ENCODE measurements at regions of chr6 and their contacts with region 1.

Region 1: DNA sequence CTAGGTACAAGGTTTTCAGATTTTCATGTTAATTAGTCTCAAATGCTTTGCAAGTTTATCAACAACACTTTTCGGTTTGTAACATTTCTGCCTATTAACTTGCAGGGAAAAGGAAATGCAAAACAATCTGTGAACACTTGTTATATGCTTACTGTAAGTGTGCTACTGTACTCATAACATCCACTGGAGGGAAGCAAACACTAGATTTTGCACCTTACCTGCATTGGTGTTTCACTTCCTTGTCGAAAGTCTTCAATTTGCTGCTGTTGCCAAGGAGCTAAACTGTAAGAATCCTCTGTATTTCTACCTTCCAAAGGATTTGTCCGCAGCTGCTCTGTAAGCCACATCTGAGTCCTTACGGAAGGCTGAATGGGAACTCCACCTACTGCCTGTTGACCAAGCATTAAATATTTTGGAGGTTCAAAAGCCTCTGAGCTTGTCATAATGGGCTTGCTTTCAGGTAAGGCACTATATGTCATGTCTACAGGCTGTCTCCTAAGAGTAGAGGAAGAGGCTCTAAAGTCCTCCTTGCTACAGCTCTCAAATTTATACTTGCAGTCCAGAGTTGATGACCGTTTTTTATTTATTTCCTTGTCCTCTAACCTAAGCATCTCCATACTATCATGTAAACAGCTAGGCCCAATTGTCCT is 17.3 kb downstream of the PLN start:
- DNase-seq: peak; percentile 42
- H3K4me3 Mint-ChIP-seq: no peak overlapping the region
- H3K27ac Mint-ChIP-seq: peak overlapping the region; percentile 42
- H3K4me1 Mint-ChIP-seq: no peaks in the 10 kb centered on the region
- H3K27me3 Mint-ChIP-seq: no peaks in the 10 kb centered on the region
- CTCF ChIP-seq: peak; percentile 52

Region 2: GRCh38 chr6:118551063-118552053 is 14.1 kb before region 1 on chr6:
- CTCF ChIA-PET with region 1: interaction called, 15 read pairs
- POLR2A ChIA-PET with region 1: interaction called, 3 read pairs
- intact Hi-C with region 1: no loop called
- DNase-seq: peak; percentile 56
- H3K4me3 Mint-ChIP-seq: no peak overlapping the region
- H3K27ac Mint-ChIP-seq: no peak overlapping the region
- H3K4me1 Mint-ChIP-seq: peaks cover 12% of the 10 kb centered on the region
- H3K27me3 Mint-ChIP-seq: no peaks in the 10 kb centered on the region
- CTCF ChIP-seq: peak; percentile 59

Region 3: GRCh38 chr6:118618679-118619377 is 53.4 kb after region 1 on chr6:
- CTCF ChIA-PET with region 1: interaction called, 20 read pairs
- POLR2A ChIA-PET with region 1: no interaction called
- intact Hi-C with region 1: loop called (anchors 1 kb)
- DNase-seq: peak; percentile 67
- H3K4me3 Mint-ChIP-seq: no peak overlapping the region
- H3K27ac Mint-ChIP-seq: no peak overlapping the region
- H3K4me1 Mint-ChIP-seq: peaks cover 7% of the 10 kb centered on the region
- H3K27me3 Mint-ChIP-seq: no peaks in the 10 kb centered on the region
- CTCF ChIP-seq: peak; percentile 89

Region 4: DNA sequence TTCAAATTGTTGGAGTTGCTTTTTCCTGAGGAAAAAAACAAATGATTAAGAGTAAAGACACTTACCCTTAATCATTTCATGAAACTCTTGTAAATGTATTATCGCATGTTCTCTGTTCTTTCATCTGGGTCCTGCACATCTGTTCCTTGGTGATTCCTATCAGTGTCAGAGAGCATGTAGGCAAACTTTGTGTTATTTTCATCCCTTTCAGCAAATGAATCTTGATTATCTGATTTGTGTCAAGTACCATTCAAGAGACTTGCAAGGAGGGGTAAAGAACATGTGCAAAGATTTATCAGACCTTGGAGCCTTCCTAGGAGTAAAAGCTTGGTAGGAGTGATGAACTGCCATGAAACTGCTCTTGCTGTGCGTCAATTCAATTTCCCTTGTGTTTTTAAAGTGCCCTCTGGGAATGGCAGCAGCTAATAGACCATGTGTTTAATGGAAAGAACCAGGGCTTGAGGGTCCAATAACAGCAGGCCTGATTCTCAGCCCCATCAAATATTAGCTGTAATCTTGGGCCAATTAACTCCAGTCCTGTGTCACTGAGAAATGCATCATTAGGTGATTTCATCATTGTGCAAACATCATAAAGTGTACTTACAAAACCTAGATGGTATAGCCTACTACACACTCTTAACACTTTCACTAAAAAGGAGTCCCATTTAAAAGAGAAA is 204.8 kb after region 1 on chr6:
- CTCF ChIA-PET with region 1: interaction called, 11 read pairs
- POLR2A ChIA-PET with region 1: no interaction called
- intact Hi-C with region 1: no loop called
- DNase-seq: no peak
- H3K4me3 Mint-ChIP-seq: no peak overlapping the region
- H3K27ac Mint-ChIP-seq: no peak overlapping the region
- H3K4me1 Mint-ChIP-seq: peaks cover 3% of the 10 kb centered on the region
- H3K27me3 Mint-ChIP-seq: no peaks in the 10 kb centered on the region
- CTCF ChIP-seq: no peak

Region 5: DNA sequence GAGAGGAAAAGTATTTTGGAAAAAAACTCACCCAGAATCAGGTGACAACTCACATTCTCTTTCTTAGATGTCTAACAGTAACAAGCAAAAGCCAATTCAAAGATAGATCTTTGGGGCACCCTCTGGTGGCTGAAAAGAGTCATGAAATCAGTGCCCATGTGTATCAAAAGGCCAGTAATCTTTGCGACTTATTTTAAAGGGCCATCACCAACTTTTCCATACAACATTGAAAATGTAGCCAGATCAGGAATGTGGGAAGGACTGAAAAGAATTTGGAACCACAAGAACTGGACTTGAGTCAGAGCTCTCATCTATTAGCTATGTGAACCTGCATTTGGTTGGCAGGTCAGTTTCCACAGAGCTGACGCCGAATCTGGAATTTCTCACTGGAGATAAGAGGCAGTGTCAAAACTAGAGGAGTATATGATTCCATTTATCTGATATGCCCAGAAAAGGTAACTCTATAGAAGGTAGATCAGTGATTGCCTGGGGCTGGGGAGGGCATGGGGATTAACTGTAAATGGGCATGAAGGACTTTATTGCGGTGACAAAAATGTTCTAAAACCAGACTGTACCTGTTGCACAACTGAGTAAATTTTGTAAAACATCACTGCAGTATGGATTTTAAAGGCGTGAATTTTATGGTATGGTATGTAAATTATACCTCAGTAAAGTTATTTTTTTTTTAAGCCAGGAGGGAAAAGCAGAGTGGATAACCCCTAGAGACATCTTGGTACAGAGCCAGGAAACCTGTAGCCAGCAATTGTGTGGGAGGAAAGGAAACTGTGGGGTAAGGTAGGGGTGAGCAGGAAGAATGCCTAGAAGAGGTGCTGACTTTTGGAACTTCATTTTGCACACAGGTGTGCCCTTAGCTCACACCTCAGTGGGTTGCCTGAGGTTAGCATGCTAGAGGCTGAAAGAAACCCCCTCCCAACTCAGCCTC is 211.4 kb after region 1 on chr6:
- CTCF ChIA-PET with region 1: interaction called, 11 read pairs
- POLR2A ChIA-PET with region 1: no interaction called
- intact Hi-C with region 1: loop called (anchors 1 kb)
- DNase-seq: peak; percentile 85
- H3K4me3 Mint-ChIP-seq: peak overlapping the region; percentile 49
- H3K27ac Mint-ChIP-seq: no peak overlapping the region
- H3K4me1 Mint-ChIP-seq: peaks cover 13% of the 10 kb centered on the region
- H3K27me3 Mint-ChIP-seq: no peaks in the 10 kb centered on the region
- CTCF ChIP-seq: peak; percentile 51

Region 6: DNA sequence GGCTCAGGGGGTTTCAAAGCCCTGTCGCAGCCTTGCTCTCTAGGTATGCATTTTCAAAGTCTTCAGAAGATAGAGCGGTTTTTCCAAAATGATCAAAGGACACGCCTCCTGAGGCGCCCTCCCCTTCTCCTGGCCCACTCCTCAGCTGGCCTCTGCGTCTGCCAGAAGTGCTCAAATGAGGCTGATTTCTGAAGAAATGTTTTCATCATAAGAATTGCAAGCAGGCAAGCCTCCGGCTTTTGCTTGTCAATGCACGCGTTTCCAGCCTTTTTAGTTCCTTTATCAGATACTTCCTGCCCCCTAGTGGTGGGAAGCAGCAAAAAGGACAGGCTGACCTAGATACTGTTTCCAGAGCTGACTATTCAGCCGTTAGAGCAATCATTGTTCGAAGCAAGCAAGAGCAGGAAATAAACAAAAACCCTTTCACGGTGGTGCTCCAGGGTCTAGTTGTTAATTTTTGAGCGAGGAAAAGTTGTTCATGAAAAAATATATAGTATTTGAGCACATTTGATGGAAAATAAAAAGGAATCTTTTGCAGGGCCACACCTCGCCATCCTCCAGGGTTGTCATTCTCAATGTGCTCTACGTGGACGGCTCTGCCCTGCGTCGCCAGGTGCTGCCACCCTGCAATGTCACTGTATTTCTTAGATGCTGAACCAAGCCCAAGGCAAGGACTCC is 235.1 kb after region 1 on chr6:
- CTCF ChIA-PET with region 1: interaction called, 11 read pairs
- POLR2A ChIA-PET with region 1: no interaction called
- intact Hi-C with region 1: loop called (anchors 1 kb)
- DNase-seq: peak; percentile 86
- H3K4me3 Mint-ChIP-seq: no peak overlapping the region
- H3K27ac Mint-ChIP-seq: no peak overlapping the region
- H3K4me1 Mint-ChIP-seq: peaks cover 7% of the 10 kb centered on the region
- H3K27me3 Mint-ChIP-seq: no peaks in the 10 kb centered on the region
- CTCF ChIP-seq: peak; percentile 81

Region 7: GRCh38 chr6:118893807-118894424 is 328.5 kb after region 1 on chr6 and contains the start of gene ASF1A:
- CTCF ChIA-PET with region 1: interaction called, 13 read pairs
- POLR2A ChIA-PET with region 1: no interaction called
- intact Hi-C with region 1: no loop called
- DNase-seq: peak; percentile 99
- H3K4me3 Mint-ChIP-seq: peak within 1 kb of the TSS; percentile 95
- H3K27ac Mint-ChIP-seq: peak within 1 kb of the TSS; percentile 95
- H3K4me1 Mint-ChIP-seq: peaks cover 21% of the 10 kb centered on the region
- H3K27me3 Mint-ChIP-seq: no peaks in the 10 kb centered on the region
- CTCF ChIP-seq: peak; percentile 52
- total RNA-seq, gene ASF1A: 30.4 and 36.4 TPM in 2 replicates